Ovary (tissue), 10 donors: ENCODE measurements at regions of chr12 and their contacts with region 1.

Region 1: DNA sequence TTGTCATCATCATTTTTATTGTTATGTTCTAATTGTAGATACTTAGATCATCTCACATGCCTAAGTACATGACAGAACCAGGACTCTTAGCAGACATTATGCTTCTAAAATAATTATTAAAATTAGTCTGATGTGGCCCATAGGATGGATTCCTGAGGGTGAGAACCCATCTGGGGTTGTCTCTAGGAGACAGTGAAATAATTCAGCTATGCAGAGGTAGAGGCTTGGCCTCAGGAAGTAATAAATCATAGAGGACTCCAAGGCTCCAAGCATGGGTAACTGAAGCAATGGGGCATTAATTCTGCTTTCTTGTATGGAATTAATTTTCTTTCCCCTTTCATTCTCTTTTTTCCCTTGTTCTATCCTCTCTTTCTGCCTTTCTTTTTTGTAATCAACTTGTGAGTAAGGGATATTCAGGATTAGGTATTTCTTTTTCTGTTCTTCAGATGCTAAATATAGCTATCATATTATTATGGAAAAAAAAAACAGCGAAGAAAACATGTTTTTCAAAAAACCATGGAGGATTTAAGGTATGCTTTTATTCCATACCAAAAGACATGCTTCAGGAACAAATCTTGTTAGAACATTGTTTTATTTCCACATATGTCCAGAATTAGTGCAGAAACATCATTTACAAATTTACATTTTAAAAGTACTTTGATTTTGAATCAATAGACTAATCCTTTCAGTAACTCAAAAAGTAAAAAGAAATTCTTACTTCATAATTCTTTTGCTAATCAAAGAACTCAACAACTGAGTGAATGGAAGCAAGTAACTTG is 263.2 kb downstream of the TRHDE start:
- DNase-seq: no peak
- H3K4me3 ChIP-seq: no peak overlapping the region
- H3K27ac ChIP-seq: no peak overlapping the region
- H3K4me1 ChIP-seq: no peaks in the 10 kb centered on the region
- H3K27me3 ChIP-seq: no peaks in the 10 kb centered on the region
- CTCF ChIP-seq: no peak
- EP300 ChIP-seq: no peak
- POLR2A ChIP-seq: no peak

Region 2: GRCh38 chr12:72448089-72448488 is 87.3 kb before region 1 on chr12:
- intact Hi-C with region 1: loop called in 1 of 4 experiments (anchors 5 kb)
- DNase-seq: no peak
- H3K4me3 ChIP-seq: no peak overlapping the region
- H3K27ac ChIP-seq: no peak overlapping the region
- H3K4me1 ChIP-seq: no peaks in the 10 kb centered on the region
- H3K27me3 ChIP-seq: no peaks in the 10 kb centered on the region
- CTCF ChIP-seq: no peak
- EP300 ChIP-seq: no peak
- POLR2A ChIP-seq: no peak